HAP-1 (cell line): ENCODE measurements at regions of chr1 and their contacts with region 1.

Region 1: DNA sequence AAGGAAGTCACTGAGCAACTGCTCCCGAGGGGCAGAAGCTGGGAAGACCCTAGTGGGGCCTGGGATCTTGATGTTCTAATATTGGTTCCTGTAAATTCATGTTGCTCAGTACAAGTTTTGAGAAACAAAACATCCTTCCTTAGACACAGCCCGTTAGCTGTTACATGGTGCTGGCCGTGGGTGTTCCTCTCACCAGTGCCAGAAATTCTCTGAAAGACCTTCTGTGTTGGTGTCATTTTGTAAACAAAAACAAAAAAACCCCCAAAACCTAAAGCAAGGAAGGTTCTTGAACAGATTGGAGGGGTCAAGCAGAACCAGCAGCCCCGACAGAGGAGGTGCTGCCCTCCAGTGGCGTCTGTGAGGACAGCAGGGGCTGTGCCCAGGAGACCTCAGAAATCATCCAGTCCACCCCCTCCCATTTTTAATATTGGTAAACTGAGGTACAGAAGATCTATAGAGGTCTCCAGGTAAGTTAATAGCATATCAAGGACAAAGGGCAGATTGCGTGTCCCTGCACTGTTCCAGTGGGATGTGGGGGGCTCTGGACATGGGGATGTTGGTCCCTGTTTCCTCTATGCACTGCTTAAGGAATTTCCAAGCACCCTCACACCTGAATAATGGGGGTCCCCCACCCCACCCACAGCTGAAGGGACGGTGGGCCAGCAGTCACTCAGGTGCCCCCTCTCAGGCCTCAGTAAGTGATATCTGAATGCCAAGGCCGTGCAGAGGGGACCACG is 38.2 kb downstream of the SLC2A7 start:
- DNase-seq: peak in 1 of 2 experiments; percentile 75
- H3K4me3 ChIP-seq: no peak overlapping the region
- H3K4me1 ChIP-seq: no peaks in the 10 kb centered on the region
- H3K27me3 ChIP-seq: no peaks in the 10 kb centered on the region

Region 2: GRCh38 chr1:8915446-8915845 is 72.6 kb before region 1 on chr1:
- in situ Hi-C with region 1: loop called (anchors 5 kb)
- DNase-seq: peak; percentile 52 to 95
- H3K4me3 ChIP-seq: no peak overlapping the region
- H3K4me1 ChIP-seq: peaks cover 25% of the 10 kb centered on the region
- H3K27me3 ChIP-seq: no peaks in the 10 kb centered on the region